OCI-LY7 (cell line): ENCODE measurements at regions of chr15 and their contacts with region 1.

Region 1: GRCh38 chr15:28086175-28086703 is 12.9 kb downstream of the OCA2 start:
- DNase-seq: peak; percentile 72
- H3K4me3 ChIP-seq: no peak overlapping the region
- H3K27ac ChIP-seq: no peak overlapping the region
- H3K4me1 ChIP-seq: no peaks in the 10 kb centered on the region
- CTCF ChIP-seq: peak; percentile 83

Region 2: DNA sequence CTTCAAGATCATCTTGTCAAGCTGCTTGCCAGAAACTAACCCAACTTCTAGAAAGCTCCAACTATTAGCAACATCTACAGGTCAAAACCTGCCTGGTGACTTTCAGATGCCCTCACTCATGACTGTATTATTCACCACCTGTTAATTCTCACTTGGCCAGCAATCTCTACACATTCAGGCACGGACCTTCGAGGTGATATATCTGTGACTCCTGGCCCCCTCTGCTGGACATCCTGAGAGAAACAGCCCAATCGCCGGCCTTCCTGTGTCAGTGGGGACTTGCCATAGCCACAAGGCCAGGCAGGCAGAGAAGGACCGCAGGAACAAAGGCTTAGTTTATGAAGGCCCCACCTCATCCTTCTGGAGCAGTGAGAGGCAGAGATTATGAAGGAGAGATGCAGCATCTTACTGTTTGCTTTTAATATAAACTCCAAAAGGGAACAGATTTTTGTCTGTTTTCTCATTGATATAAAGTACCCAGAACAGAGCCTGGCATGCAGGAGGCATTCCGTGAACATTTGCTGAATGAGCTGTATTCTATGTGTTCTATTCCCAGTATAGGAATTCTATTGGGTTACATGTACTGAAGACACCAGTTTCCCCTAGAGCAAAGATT is 37.3 kb after region 1 on chr15:
- CTCF ChIA-PET with region 1: no interaction called
- POLR2A ChIA-PET with region 1: no interaction called
- intact Hi-C with region 1: loop called (anchors 1 kb)
- DNase-seq: peak; percentile 60
- H3K4me3 ChIP-seq: no peak overlapping the region
- H3K27ac ChIP-seq: no peak overlapping the region
- H3K4me1 ChIP-seq: peaks cover 7% of the 10 kb centered on the region
- CTCF ChIP-seq: peak; percentile 80

Region 3: DNA sequence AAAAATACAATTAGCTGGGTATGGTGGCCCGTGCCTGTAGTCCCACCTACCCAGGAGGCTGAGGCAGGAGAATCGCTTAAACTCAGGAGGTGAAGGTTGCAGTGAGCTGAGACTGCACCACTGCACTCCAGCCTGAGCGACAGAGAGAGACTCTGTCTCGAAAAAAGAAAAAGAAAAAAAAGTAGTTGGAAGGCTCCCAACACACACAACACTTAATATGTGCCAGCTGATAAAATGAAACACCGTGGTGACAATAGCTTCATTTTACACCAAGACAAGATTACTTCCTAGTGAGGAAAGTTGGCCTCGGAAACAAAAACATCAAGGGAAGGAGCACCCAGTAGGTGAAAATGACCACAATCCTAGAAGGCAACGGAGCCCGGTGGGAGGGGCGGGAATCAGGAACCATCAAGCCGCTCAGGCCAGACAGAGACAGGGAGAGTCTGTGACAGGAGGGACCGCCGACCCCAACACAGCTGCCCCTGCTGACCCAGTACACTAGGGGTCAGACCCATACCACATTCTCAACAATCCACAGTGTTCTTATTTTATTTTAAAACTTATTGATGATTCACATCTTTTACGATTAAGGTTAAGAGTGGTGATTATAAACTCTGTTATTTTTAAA is 67.4 kb after region 1 on chr15:
- CTCF ChIA-PET with region 1: interaction called, 11 read pairs
- POLR2A ChIA-PET with region 1: no interaction called
- intact Hi-C with region 1: no loop called
- DNase-seq: no peak
- H3K4me3 ChIP-seq: no peak overlapping the region
- H3K27ac ChIP-seq: no peak overlapping the region
- H3K4me1 ChIP-seq: no peaks in the 10 kb centered on the region
- CTCF ChIP-seq: no peak